Activated CD8-positive, alpha-beta T cell treated with anti-CD3 and anti-CD28 coated beads for 36 hours (primary cell): ENCODE measurements at regions of chr15 and their contacts with region 1.

Region 1: DNA sequence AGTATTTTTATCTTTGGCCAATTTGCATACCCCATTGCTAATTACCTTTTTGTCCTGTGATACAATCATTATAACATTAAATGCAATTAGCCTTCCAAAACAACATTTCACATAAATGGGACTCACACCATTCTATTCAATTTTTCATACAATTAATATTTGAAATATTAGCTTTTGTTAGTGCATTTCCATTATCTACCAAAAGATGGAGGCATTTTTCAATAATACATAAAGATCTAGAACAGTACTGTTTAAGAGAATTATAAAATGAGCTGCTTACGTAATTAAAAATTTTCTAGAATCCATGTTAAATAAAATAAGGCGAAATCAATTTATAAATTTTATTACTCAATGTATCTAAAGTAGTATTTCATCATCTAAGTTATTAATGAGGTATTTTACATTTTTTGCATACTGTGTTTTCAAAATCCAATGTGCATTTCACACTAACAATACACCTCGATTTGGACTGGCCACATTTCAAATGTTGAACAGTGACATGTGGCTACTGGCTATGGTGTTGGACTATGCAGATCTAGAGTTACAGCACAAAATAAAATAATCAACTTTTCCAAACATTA is 74.3 kb downstream of the TJP1 start:
- DNase-seq: no peak
- ATAC-seq: no peak
- H3K4me3 Mint-ChIP-seq: no peak overlapping the region
- H3K27ac Mint-ChIP-seq: no peak overlapping the region
- H3K4me1 Mint-ChIP-seq: no peaks in the 10 kb centered on the region
- H3K27me3 Mint-ChIP-seq: peaks cover 8% of the 10 kb centered on the region
- CTCF ChIP-seq: peak; percentile 46

Region 2: GRCh38 chr15:29784413-29784812 is 36.5 kb after region 1 on chr15:
- CTCF ChIA-PET with region 1: no interaction called
- POLR2A ChIA-PET with region 1: no interaction called
- intact Hi-C with region 1: no loop called
- DNase-seq: no peak
- ATAC-seq: no peak
- H3K4me3 Mint-ChIP-seq: no peak overlapping the region
- H3K27ac Mint-ChIP-seq: no peak overlapping the region
- H3K4me1 Mint-ChIP-seq: no peaks in the 10 kb centered on the region
- H3K27me3 Mint-ChIP-seq: peaks cover 11% of the 10 kb centered on the region
- CTCF ChIP-seq: no peak

Region 3: GRCh38 chr15:29925227-29926082 is 177.5 kb after region 1 on chr15:
- CTCF ChIA-PET with region 1: interaction called, 6 read pairs
- POLR2A ChIA-PET with region 1: no interaction called
- intact Hi-C with region 1: loop called (anchors 5 kb)
- DNase-seq: peak; percentile 60
- ATAC-seq: peak; percentile 47
- H3K4me3 Mint-ChIP-seq: no peak overlapping the region
- H3K27ac Mint-ChIP-seq: no peak overlapping the region
- H3K4me1 Mint-ChIP-seq: no peaks in the 10 kb centered on the region
- H3K27me3 Mint-ChIP-seq: peaks cover 27% of the 10 kb centered on the region
- CTCF ChIP-seq: peak; percentile 52

Region 4: DNA sequence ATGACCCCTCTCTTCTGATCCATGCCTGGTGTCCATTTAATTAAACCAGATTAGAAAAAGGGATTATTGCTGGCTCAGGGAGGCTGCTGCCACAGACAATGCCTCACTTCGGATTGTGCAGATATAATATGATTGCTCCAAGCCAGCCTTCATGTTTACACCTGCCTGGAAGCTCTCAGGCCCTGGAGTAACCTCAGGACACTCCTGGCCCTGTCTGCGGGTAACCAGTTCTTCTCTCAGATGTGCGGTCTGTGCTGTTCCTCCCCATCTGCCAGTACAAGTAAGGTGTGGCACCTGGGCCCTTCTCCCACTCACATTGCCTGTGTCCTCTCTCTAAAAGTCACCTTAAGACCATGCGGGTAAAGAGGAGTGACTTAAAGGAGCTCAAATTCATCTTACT is 326.0 kb after region 1 on chr15:
- CTCF ChIA-PET with region 1: interaction called, 4 read pairs
- POLR2A ChIA-PET with region 1: no interaction called
- intact Hi-C with region 1: loop called (anchors 5 kb)
- DNase-seq: no peak
- ATAC-seq: no peak
- H3K4me3 Mint-ChIP-seq: no peak overlapping the region
- H3K27ac Mint-ChIP-seq: no peak overlapping the region
- H3K4me1 Mint-ChIP-seq: no peaks in the 10 kb centered on the region
- H3K27me3 Mint-ChIP-seq: peaks cover 7% of the 10 kb centered on the region
- CTCF ChIP-seq: no peak